ENCODE measurements at regions of chr7 and their contacts with region 1.

Region 1: GRCh38 chr7:8290645-8291314 is 28.8 kb upstream of the ICA1 start:
- DNase-seq: peak; percentile 80 to 83
- H3K4me3 ChIP-seq: no peak overlapping the region
- H3K4me3 Mint-ChIP-seq: no peak overlapping the region
- H3K27ac Mint-ChIP-seq: no peak overlapping the region
- H3K4me1 ChIP-seq: peaks cover 21% of the 10 kb centered on the region
- H3K4me1 Mint-ChIP-seq: peaks cover 42% of the 10 kb centered on the region
- H3K27me3 ChIP-seq: no peaks in the 10 kb centered on the region
- H3K27me3 Mint-ChIP-seq: no peaks in the 10 kb centered on the region
- CTCF ChIP-seq: no peak

Region 2: GRCh38 chr7:7996576-7996975 is 294.2 kb before region 1 on chr7:
- CTCF ChIA-PET with region 1: no interaction called
- POLR2A ChIA-PET with region 1: no interaction called
- intact Hi-C with region 1: loop called (anchors 5 kb)
- DNase-seq: peak; percentile 66 to 77
- H3K4me3 ChIP-seq: no peak overlapping the region
- H3K4me3 Mint-ChIP-seq: peak overlapping the region; percentile 26
- H3K27ac Mint-ChIP-seq: peak overlapping the region; percentile 84
- H3K4me1 ChIP-seq: peaks cover 18% of the 10 kb centered on the region
- H3K4me1 Mint-ChIP-seq: peaks cover 10% of the 10 kb centered on the region
- H3K27me3 ChIP-seq: no peaks in the 10 kb centered on the region
- H3K27me3 Mint-ChIP-seq: no peaks in the 10 kb centered on the region
- CTCF ChIP-seq: no peak

Region 3: GRCh38 chr7:8261711-8262695 is 28.8 kb before region 1 on chr7 and contains the start of gene ICA1:
- CTCF ChIA-PET with region 1: no interaction called
- POLR2A ChIA-PET with region 1: no interaction called
- intact Hi-C with region 1: loop called (anchors 1 kb)
- DNase-seq: peak; percentile 81 to 87
- H3K4me3 ChIP-seq: peak within 1 kb of the TSS; percentile 91
- H3K4me3 Mint-ChIP-seq: peak within 1 kb of the TSS; percentile 94
- H3K27ac Mint-ChIP-seq: peak within 1 kb of the TSS; percentile 91
- H3K4me1 ChIP-seq: peaks cover 6% of the 10 kb centered on the region; the same call in 1 of the 2 replicates
- H3K4me1 Mint-ChIP-seq: peaks cover 6% of the 10 kb centered on the region
- H3K27me3 ChIP-seq: no peaks in the 10 kb centered on the region
- H3K27me3 Mint-ChIP-seq: no peaks in the 10 kb centered on the region
- CTCF ChIP-seq: no peak
- total RNA-seq, gene ICA1: 30.7 and 34.2 TPM in 2 replicates

Region 4: DNA sequence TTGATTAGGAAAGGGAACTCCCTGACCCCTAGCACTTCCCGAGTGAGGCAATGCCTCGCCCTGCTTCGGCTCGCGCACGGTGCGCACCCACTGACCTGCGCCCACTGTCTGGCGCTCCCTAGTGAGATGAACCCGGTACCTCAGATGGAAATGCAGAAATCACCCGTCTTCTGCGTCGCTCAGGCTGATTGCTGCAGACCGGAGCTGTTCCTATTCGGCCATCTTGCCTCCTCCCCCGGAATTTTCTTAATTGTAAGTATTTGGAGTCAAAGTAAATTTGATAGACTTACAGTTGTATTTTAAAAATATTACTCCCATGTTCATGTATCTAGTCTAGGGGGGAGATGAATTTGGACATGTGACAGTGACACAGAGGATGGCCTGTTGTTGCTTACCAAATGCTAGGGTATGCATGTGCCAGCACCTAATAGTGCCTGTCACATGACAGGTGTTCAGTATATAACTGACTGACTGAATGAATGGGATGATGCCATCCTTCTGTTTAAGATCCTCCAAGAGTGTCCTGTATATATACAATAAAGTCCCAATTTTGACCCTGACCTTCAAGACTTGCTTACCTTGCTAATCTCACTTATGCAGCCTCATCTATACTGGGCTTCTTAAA is 13.2 kb after region 1 on chr7:
- CTCF ChIA-PET with region 1: no interaction called
- POLR2A ChIA-PET with region 1: no interaction called
- intact Hi-C with region 1: no loop called
- DNase-seq: peak; percentile 77 to 80
- H3K4me3 ChIP-seq: peak overlapping the region; percentile 45
- H3K4me3 Mint-ChIP-seq: peak overlapping the region; percentile 90
- H3K27ac Mint-ChIP-seq: peak overlapping the region; percentile 88
- H3K4me1 ChIP-seq: peaks cover 14% of the 10 kb centered on the region
- H3K4me1 Mint-ChIP-seq: peaks cover 19% of the 10 kb centered on the region
- H3K27me3 ChIP-seq: no peaks in the 10 kb centered on the region
- H3K27me3 Mint-ChIP-seq: no peaks in the 10 kb centered on the region
- CTCF ChIP-seq: peak in 1 of 2 experiments; percentile 16